Right ventricle myocardium inferior (tissue), 1 donor: ENCODE measurements at regions of chr2 and their contacts with region 1.

Region 1: DNA sequence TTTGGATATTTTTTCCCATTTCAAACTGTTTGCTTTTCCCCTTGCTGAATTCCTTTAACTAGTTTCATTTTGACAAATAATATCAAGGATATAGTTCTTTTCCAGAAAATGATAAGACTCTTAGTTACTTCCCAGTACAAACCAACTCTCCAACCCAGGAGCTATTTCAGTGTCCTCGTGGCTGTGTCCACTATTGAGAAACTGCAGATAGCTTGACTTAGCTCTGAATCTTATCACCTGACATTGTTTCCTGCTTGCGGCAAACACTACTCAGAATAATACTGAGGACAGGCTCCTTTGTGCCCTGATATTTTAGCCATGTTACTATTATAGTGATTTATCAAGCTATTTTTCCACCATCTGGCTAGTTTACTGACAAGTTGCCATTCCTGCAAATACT is 74.6 kb downstream of the KLF7 start:
- DNase-seq: no peak
- ATAC-seq: peak; percentile 73

Region 2: GRCh38 chr2:207073801-207074678 is 17.1 kb before region 1 on chr2:
- intact Hi-C with region 1: loop called (anchors 1 kb)
- DNase-seq: peak; percentile 68
- ATAC-seq: peak; percentile 67

Region 3: DNA sequence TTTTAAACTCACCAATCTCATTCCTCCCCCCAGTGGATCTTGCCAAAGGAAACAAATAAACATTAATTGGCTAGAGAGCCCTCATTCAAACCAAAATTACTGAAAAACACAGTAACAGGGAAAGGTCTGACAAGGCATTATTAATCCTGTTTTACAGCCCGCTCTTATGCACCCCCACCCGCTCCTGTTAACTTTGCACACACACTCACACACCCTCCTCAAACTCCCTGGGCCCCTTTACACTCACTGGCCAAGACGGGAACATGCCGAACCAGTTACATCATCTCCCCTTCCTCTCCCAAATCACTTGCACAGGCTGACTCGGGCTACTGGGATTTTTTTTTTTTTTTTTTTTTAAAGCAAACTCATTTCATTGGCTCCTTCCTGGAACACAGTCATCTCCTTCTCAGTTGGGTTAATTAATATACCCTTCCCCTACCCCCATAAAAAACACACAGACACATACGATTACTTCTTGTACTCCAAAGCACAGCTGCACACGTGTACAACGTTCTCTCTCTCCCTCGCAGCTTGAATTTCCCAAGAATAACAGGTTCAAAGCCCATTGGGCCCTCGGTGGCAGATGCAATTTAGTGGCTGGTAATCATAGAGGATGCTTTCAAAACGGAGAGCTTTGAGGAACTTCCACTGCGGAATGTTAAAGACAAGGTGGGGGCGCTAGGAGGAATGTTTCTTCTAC is 42.8 kb after region 1 on chr2:
- intact Hi-C with region 1: loop called (anchors 5 kb)
- DNase-seq: peak; percentile 78
- ATAC-seq: peak; percentile 97

Region 4: GRCh38 chr2:207216457-207216856 is 125.3 kb after region 1 on chr2:
- intact Hi-C with region 1: no loop called
- DNase-seq: no peak
- ATAC-seq: no peak